H1 (cell line): ENCODE measurements at regions of chr11 and their contacts with region 1.

Region 1: GRCh38 chr11:8099291-8099899 is 18.4 kb downstream of the TUB start:
- DNase-seq: peak in 1 of 2 experiments; percentile 87
- H3K4me3 ChIP-seq: no peak overlapping the region
- H3K27ac ChIP-seq: no peak overlapping the region
- H3K4me1 ChIP-seq: no peaks in the 10 kb centered on the region
- H3K27me3 ChIP-seq: no peaks in the 10 kb centered on the region; a peak in 1 of 7 replicates
- CTCF ChIP-seq: peak; percentile 54 to 75 (median 73)
- EP300 ChIP-seq: no peak
- POLR2A ChIP-seq: no peak
- RAD21 ChIP-seq: peak; percentile 83 to 88

Region 2: GRCh38 chr11:7874061-7874460 is 225.3 kb before region 1 on chr11:
- CTCF ChIA-PET with region 1: no interaction called
- POLR2A ChIA-PET with region 1: no interaction called
- DNase-seq: no peak
- H3K4me3 ChIP-seq: no peak overlapping the region
- H3K27ac ChIP-seq: no peak overlapping the region
- H3K4me1 ChIP-seq: no peaks in the 10 kb centered on the region
- H3K27me3 ChIP-seq: no peaks in the 10 kb centered on the region
- CTCF ChIP-seq: no peak
- EP300 ChIP-seq: no peak
- POLR2A ChIP-seq: no peak
- RAD21 ChIP-seq: no peak

Region 3: DNA sequence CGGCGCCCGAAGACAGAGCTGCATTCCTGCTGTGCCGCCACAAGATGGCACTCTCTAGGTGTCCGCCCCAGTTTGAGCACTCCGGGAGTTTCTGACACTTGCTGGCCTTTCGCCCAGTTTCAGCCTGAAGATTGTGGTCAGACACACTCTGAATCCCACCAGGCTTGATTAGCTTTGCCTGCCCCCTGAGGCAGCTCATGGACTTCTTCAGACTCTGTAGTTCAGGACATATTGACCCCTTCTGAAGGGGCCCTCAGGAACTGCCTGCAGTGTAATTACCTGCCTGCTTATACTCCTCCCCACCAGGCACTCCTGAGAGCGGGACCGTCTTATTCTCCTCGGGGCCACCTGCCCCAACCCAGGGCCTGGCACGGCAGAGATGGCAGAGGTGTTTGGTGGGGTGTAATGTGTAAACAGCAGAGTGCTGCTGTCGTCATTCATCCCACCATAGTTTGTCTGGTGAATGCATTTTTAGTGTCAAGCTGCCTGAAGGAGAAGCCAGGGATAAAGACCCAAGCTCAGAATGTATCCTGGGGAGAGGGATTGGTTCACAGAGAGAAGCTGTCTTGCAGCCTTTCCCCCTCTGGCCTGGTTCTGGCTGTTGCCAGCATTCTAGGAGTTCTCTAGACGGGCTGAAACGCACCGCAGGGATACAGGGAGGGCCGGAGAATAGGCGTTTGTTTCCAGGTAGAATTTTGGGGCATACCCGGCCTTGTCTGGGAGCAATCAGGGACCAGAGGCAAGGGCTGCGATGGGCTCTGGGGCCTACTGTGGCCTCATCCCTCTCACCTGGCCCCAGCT is 65.9 kb before region 1 on chr11:
- CTCF ChIA-PET with region 1: interaction called, 1,283 read pairs
- POLR2A ChIA-PET with region 1: interaction called, 4 read pairs
- DNase-seq: peak in 1 of 2 experiments; percentile 88
- H3K4me3 ChIP-seq: 0 out of 8 replicates have a peak overlapping the region, but pooled peaks of 1 of the 4 experiments have one; percentile 29
- H3K27ac ChIP-seq: no peak overlapping the region
- H3K4me1 ChIP-seq: peaks cover 0 to 13% (median 4%) of the 10 kb centered on the region in 4 experiments; a peak in 5 of 7 replicates
- H3K27me3 ChIP-seq: peaks cover 0 to 14% (median 6%) of the 10 kb centered on the region in 4 experiments; a peak in 5 of 7 replicates
- CTCF ChIP-seq: peak; percentile 85 to 91 (median 88)
- EP300 ChIP-seq: no peak
- POLR2A ChIP-seq: no peak
- RAD21 ChIP-seq: peak; percentile 83

Region 4: DNA sequence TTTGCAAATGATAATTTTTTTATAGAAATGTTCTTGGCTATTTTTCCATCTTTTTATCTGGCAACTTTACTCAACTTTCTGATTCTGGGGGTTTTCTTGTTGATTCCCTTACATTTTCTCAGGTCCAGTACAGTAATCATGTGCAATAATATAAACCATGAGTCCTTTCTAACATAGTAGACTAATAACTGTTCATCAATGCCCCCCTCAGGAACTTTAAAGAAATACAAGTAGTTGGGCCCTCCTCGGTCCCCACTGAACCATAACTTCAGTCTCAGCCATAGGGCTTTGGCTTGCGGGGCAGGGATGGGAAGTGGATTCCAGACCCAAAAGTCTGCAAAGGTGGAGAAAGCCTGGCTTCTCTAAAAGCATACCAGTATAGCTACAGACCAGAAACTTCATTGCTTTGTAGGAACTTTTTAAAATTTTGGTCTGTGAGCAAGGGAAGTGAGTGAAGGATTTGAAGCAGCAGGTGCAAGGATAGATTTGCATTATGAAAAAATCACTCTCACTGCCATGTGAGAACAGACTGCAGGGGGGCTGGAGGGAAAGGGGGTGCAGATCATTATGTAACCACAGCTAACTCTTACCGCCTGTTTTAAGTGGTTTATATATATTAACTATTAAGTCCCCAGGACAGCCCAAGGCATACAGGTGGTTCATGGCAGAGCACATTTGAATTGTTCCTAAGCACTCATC is 28.8 kb before region 1 on chr11:
- CTCF ChIA-PET with region 1: interaction called, 106 read pairs
- POLR2A ChIA-PET with region 1: no interaction called
- DNase-seq: no peak
- H3K4me3 ChIP-seq: no peak overlapping the region
- H3K27ac ChIP-seq: no peak overlapping the region
- H3K4me1 ChIP-seq: peaks cover 2 to 18% (median 7%) of the 10 kb centered on the region in 4 experiments
- H3K27me3 ChIP-seq: no peaks in the 10 kb centered on the region; a peak in 2 of 7 replicates
- CTCF ChIP-seq: peak in 1 of 3 experiments; percentile 15; a peak in 1 of 4 replicates
- EP300 ChIP-seq: no peak
- POLR2A ChIP-seq: no peak
- RAD21 ChIP-seq: peak; percentile 19 to 38; a peak in 3 of 4 replicates

Region 5: DNA sequence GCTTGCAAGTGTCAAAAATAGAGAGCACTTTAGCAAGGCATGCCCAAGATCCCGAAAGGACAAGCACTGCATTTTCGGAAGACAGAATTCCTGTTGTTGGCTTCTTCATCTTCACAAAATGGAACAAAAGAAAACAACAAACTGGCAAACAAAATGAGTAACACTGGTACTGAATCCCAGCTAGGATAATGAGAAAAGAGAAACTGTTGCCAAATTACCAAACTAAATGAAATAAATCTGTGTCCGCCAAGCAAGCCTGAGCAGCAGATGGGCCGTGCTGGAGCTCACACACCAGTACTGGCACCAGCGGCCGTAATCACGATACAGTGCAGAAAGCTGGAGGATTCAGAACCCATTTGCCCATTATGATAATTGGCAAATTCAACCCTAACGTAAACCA is 12.2 kb after region 1 on chr11:
- CTCF ChIA-PET with region 1: interaction called, 96 read pairs
- POLR2A ChIA-PET with region 1: interaction called, 12 read pairs
- DNase-seq: no peak
- H3K4me3 ChIP-seq: no peak overlapping the region
- H3K27ac ChIP-seq: no peak overlapping the region
- H3K4me1 ChIP-seq: no peaks in the 10 kb centered on the region
- H3K27me3 ChIP-seq: no peaks in the 10 kb centered on the region
- CTCF ChIP-seq: no peak
- EP300 ChIP-seq: no peak
- POLR2A ChIP-seq: no peak
- RAD21 ChIP-seq: no peak